ENCODE measurements at regions of chr17 and their contacts with region 1.

Region 1: GRCh38 chr17:32127158-32127897 is 15.0 kb upstream of the RHOT1 start:
- DNase-seq: peak; percentile 63 to 85 (median 82)
- ATAC-seq: peak; percentile 100
- H3K4me3 ChIP-seq: peak overlapping the region; percentile 81
- H3K4me3 Mint-ChIP-seq: peak overlapping the region; percentile 94 to 99 (median 96)
- H3K27ac ChIP-seq: peak overlapping the region; percentile 89
- H3K27ac Mint-ChIP-seq: peak overlapping the region; percentile 96 to 100 (median 97)
- H3K4me1 ChIP-seq: peaks cover 6 to 7% of the 10 kb centered on the region in 2 donors
- H3K4me1 Mint-ChIP-seq: peaks cover 7 to 38% (median 26%) of the 10 kb centered on the region in 7 donors
- H3K27me3 ChIP-seq: no peaks in the 10 kb centered on the region
- H3K27me3 Mint-ChIP-seq: no peaks in the 10 kb centered on the region

Region 2: DNA sequence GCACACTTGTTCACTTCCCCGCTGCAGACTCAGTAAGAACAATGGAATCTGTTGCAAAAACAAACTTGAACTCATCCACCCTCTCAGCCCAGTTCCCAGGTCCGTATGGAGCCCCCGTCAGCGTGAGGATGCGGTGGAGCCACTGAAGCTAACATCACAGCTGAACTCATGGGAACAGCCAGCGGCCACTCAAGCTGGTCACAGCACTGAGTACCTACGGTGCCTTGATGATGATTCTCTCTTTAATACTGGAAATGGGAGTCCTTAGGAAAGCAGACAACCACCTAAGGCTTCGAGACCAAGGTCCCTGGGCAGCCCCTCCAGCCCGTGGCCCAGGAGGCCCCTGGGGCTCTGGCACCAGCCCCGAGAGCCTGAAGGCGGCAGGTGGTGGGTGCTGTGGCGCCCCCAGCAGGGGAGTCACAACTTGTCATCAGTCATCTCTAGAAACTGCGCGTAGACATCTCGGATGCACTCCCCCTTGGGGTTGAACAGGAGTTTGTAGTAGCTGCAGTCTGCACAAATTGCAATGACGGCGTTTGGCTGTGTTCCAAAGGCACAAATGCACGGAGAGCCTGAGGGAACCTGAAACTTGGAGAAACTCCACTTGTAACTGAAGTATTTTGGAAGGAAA is 16.1 kb before region 1 on chr17:
- CTCF ChIA-PET with region 1: interaction called, 7 read pairs
- POLR2A ChIA-PET with region 1: interaction called, 7 read pairs
- intact Hi-C with region 1: loop called in 1 of 2 experiments (anchors 1 kb)
- DNase-seq: peak in 7 of 9 donors; percentile 34 to 60 (median 37)
- ATAC-seq: peak; percentile 79
- H3K4me3 ChIP-seq: no peak overlapping the region
- H3K4me3 Mint-ChIP-seq: peak overlapping the region in 3 of 10 donors; percentile 24 to 51 (median 41)
- H3K27ac ChIP-seq: no peak overlapping the region
- H3K27ac Mint-ChIP-seq: peak overlapping the region in 2 of 9 donors; percentile 41 to 67
- H3K4me1 ChIP-seq: peaks cover 0 to 18% of the 10 kb centered on the region in 2 donors
- H3K4me1 Mint-ChIP-seq: peaks cover 12 to 39% (median 25%) of the 10 kb centered on the region in 7 donors
- H3K27me3 ChIP-seq: no peaks in the 10 kb centered on the region
- H3K27me3 Mint-ChIP-seq: no peaks in the 10 kb centered on the region

Region 3: GRCh38 chr17:32142038-32142856 is 14.9 kb after region 1 on chr17 and contains the start of gene RHOT1:
- CTCF ChIA-PET with region 1: interaction called, 28 read pairs
- POLR2A ChIA-PET with region 1: interaction called, 45 read pairs
- intact Hi-C with region 1: loop called (anchors 1 kb)
- DNase-seq: peak; percentile 55 to 84 (median 75)
- ATAC-seq: peak; percentile 90
- H3K4me3 ChIP-seq: peak within 1 kb of the TSS; percentile 91
- H3K4me3 Mint-ChIP-seq: peak within 1 kb of the TSS; percentile 92 to 100 (median 96)
- H3K27ac ChIP-seq: peak within 1 kb of the TSS; percentile 85
- H3K27ac Mint-ChIP-seq: peak within 1 kb of the TSS; percentile 77 to 93 (median 91)
- H3K4me1 ChIP-seq: peaks cover 5 to 15% of the 10 kb centered on the region in 2 donors
- H3K4me1 Mint-ChIP-seq: peaks cover 5 to 43% (median 39%) of the 10 kb centered on the region in 7 donors
- H3K27me3 ChIP-seq: no peaks in the 10 kb centered on the region
- H3K27me3 Mint-ChIP-seq: peaks cover 0 to 4% (median 0%) of the 10 kb centered on the region in 5 donors
- total RNA-seq, gene RHOT1: 24.3 to 31.7 (median 29.3) TPM

Region 4: GRCh38 chr17:32265192-32265923 is 138.0 kb after region 1 on chr17 and contains the start of gene RHBDL3:
- CTCF ChIA-PET with region 1: no interaction called
- POLR2A ChIA-PET with region 1: no interaction called
- intact Hi-C with region 1: no loop called
- DNase-seq: peak in 3 of 9 donors; percentile 16 to 36 (median 20)
- ATAC-seq: peak; percentile 65
- H3K4me3 ChIP-seq: peak within 1 kb of the TSS; percentile 56
- H3K4me3 Mint-ChIP-seq: peak within 1 kb of the TSS; percentile 62 to 88 (median 80)
- H3K27ac ChIP-seq: no peak within 1 kb of the TSS
- H3K27ac Mint-ChIP-seq: peak within 1 kb of the TSS in 2 of 9 donors; percentile 18 to 56
- H3K4me1 ChIP-seq: peaks cover 7 to 10% of the 10 kb centered on the region in 2 donors
- H3K4me1 Mint-ChIP-seq: peaks cover 8 to 30% (median 19%) of the 10 kb centered on the region in 7 donors
- H3K27me3 ChIP-seq: peaks cover 6 to 14% of the 10 kb centered on the region in 2 donors
- H3K27me3 Mint-ChIP-seq: peaks cover 43 to 83% (median 59%) of the 10 kb centered on the region in 5 donors
- total RNA-seq, gene RHBDL3: 0.07 to 0.39 TPM in 2 of 5 experiments, not detected in the others

Region 5: GRCh38 chr17:32769839-32770238 is 642.5 kb after region 1 on chr17:
- CTCF ChIA-PET with region 1: no interaction called
- POLR2A ChIA-PET with region 1: no interaction called
- intact Hi-C with region 1: no loop called
- DNase-seq: no peak
- ATAC-seq: no peak
- H3K4me3 ChIP-seq: no peak overlapping the region
- H3K4me3 Mint-ChIP-seq: no peak overlapping the region
- H3K27ac ChIP-seq: no peak overlapping the region
- H3K27ac Mint-ChIP-seq: no peak overlapping the region
- H3K4me1 ChIP-seq: no peaks in the 10 kb centered on the region
- H3K4me1 Mint-ChIP-seq: peaks cover 0 to 2% (median 0%) of the 10 kb centered on the region in 7 donors
- H3K27me3 ChIP-seq: no peaks in the 10 kb centered on the region
- H3K27me3 Mint-ChIP-seq: peaks cover 0 to 2% (median 0%) of the 10 kb centered on the region in 5 donors